CD14-positive monocyte (primary cell): ENCODE measurements at regions of chr6 and their contacts with region 1.

Region 1: GRCh38 chr6:121334299-121335086 is at the start of gene TBC1D32:
- DNase-seq: peak; percentile 87 to 94 (median 92)
- H3K4me3 ChIP-seq: peak within 1 kb of the TSS; percentile 70 to 94 (median 91)
- H3K4me3 Mint-ChIP-seq: peak within 1 kb of the TSS; percentile 91 to 100
- H3K27ac ChIP-seq: peak within 1 kb of the TSS; percentile 91 to 99
- H3K27ac Mint-ChIP-seq: peak within 1 kb of the TSS; percentile 99 to 100 (median 100)
- H3K4me1 ChIP-seq: peaks cover 7 to 11% of the 10 kb centered on the region in 2 donors
- H3K4me1 Mint-ChIP-seq: peaks cover 9% of the 10 kb centered on the region
- H3K27me3 ChIP-seq: no peaks in the 10 kb centered on the region
- H3K27me3 Mint-ChIP-seq: peaks cover 0 to 2% (median 2%) of the 10 kb centered on the region in 3 donors
- CTCF ChIP-seq: no peak
- polyA plus RNA-seq, gene TBC1D32: 0.23 to 0.64 TPM in 2 of 3 donors, not detected in the other

Region 2: DNA sequence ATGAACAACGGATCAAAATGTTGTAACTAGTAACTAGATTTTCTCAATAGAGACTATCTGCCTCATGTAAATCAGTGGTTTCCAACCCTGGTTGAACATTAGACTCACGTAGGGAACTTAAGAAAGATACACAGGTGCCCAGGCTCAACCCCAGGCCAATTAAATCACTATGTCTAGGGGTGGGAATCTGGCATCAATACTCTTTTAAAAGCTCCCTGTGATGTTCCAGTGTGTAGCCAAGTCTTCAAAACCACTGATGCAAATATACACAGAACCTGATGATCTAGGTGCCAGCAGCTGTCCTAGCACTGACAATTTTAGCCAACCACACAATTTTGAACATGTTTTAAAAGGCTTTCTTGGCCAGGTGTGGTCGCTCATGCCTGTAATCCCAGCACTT is 128.9 kb before region 1 on chr6:
- intact Hi-C with region 1: no loop called
- DNase-seq: no peak
- H3K4me3 ChIP-seq: no peak overlapping the region
- H3K4me3 Mint-ChIP-seq: no peak overlapping the region
- H3K27ac ChIP-seq: no peak overlapping the region
- H3K27ac Mint-ChIP-seq: no peak overlapping the region
- H3K4me1 ChIP-seq: no peaks in the 10 kb centered on the region
- H3K4me1 Mint-ChIP-seq: peaks cover 2% of the 10 kb centered on the region
- H3K27me3 ChIP-seq: no peaks in the 10 kb centered on the region
- H3K27me3 Mint-ChIP-seq: no peaks in the 10 kb centered on the region
- CTCF ChIP-seq: no peak

Region 3: GRCh38 chr6:122399384-122400158 is 1065.1 kb after region 1 on chr6 and contains the start of gene HSF2:
- intact Hi-C with region 1: loop called in 1 of 2 experiments (anchors 10 kb)
- DNase-seq: peak; percentile 94 to 97 (median 95)
- H3K4me3 ChIP-seq: peak within 1 kb of the TSS; percentile 82 to 97 (median 94)
- H3K4me3 Mint-ChIP-seq: peak within 1 kb of the TSS; percentile 96 to 97
- H3K27ac ChIP-seq: peak within 1 kb of the TSS; percentile 55 to 73
- H3K27ac Mint-ChIP-seq: peak within 1 kb of the TSS; percentile 66 to 91 (median 86)
- H3K4me1 ChIP-seq: peaks cover 12 to 13% of the 10 kb centered on the region in 2 donors
- H3K4me1 Mint-ChIP-seq: peaks cover 21% of the 10 kb centered on the region
- H3K27me3 ChIP-seq: no peaks in the 10 kb centered on the region
- H3K27me3 Mint-ChIP-seq: no peaks in the 10 kb centered on the region
- CTCF ChIP-seq: no peak
- polyA plus RNA-seq, gene HSF2: 2.3 to 8.8 (median 2.6) TPM